Breast epithelium (tissue), 4 donors: ENCODE measurements at regions of chr9 and their contacts with region 1.

Region 1: GRCh38 chr9:89378541-89378940 is 60.2 kb downstream of the SECISBP2 start:
- DNase-seq: no peak
- H3K4me3 ChIP-seq: no peak overlapping the region
- H3K27ac ChIP-seq: no peak overlapping the region
- H3K4me1 ChIP-seq: no peaks in the 10 kb centered on the region
- H3K27me3 ChIP-seq: no peaks in the 10 kb centered on the region
- CTCF ChIP-seq: no peak
- POLR2A ChIP-seq: no peak

Region 2: GRCh38 chr9:88056876-88057275 is 1321.7 kb before region 1 on chr9:
- intact Hi-C with region 1: no loop called
- DNase-seq: no peak
- H3K4me3 ChIP-seq: no peak overlapping the region
- H3K27ac ChIP-seq: no peak overlapping the region
- H3K4me1 ChIP-seq: no peaks in the 10 kb centered on the region
- H3K27me3 ChIP-seq: no peaks in the 10 kb centered on the region
- CTCF ChIP-seq: no peak
- POLR2A ChIP-seq: no peak

Region 3: GRCh38 chr9:89310475-89311346 is 67.8 kb before region 1 on chr9 and contains the start of gene CKS2:
- intact Hi-C with region 1: no loop called
- DNase-seq: peak; percentile 100
- H3K4me3 ChIP-seq: peak within 1 kb of the TSS; percentile 74 to 87 (median 85)
- H3K27ac ChIP-seq: peak within 1 kb of the TSS; percentile 99 to 100
- H3K4me1 ChIP-seq: peaks cover 0 to 8% of the 10 kb centered on the region in 2 donors
- H3K27me3 ChIP-seq: no peaks in the 10 kb centered on the region
- CTCF ChIP-seq: peak in 1 of 3 donors; percentile 12
- POLR2A ChIP-seq: peak; percentile 97
- total RNA-seq, gene CKS2: 18.2 to 32.4 (median 21.7) TPM

Region 4: GRCh38 chr9:89402695-89403427 is 24.3 kb after region 1 on chr9:
- intact Hi-C with region 1: loop called (anchors 1 kb)
- DNase-seq: no peak
- H3K4me3 ChIP-seq: no peak overlapping the region
- H3K27ac ChIP-seq: no peak overlapping the region
- H3K4me1 ChIP-seq: no peaks in the 10 kb centered on the region
- H3K27me3 ChIP-seq: no peaks in the 10 kb centered on the region
- CTCF ChIP-seq: no peak
- POLR2A ChIP-seq: no peak